Calu3 (cell line): ENCODE measurements at regions of chr1 and their contacts with region 1.

Region 1: DNA sequence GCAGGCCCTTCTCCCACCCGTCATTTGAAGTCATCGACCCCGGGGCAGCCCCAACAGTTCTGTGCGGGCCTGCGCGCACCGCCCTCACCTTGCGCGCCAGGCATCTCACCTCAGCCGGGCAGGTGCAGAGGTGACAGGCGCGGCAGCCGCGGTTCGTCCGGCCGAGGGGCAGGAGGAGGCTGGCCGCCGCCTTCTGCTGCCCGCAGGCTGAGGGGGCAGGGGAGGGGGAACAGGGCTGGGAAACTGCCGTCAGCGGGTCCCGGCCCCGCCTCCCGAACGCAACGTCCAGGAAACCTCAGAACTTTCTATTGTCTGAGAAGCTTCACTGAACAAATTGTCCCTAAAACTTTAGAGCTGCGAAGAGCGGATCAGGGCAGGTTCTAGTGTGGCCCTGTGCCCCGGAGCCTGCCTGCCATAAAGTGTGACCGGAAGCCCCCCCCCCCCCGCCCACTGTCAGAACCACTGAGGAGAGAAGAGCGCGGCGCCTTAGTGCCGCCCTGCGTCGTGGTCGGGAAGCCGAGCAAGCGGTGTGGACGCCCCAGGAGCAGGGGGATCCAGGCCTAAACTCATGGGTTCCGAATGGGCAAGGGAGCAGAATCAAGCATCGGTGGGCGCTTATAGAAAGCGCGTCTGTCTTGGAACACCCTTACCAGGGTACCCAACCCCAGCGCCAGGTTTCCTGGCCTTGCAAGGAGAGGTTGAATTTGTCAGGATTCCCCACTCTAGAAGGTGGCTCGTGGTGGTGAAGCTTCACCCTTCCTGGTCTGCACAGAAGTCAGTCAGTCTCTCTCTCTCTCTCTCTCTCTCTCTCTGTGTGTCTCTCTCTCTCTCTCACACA is 13.3 kb upstream of the TBX15 start:
- DNase-seq: peak; percentile 35
- H3K4me3 Mint-ChIP-seq: peak overlapping the region; percentile 68
- H3K27ac Mint-ChIP-seq: peak overlapping the region; percentile 96
- H3K4me1 Mint-ChIP-seq: peaks cover 14% of the 10 kb centered on the region
- H3K27me3 Mint-ChIP-seq: peaks cover 26% of the 10 kb centered on the region
- CTCF ChIP-seq: no peak

Region 2: GRCh38 chr1:118918230-118918939 is 83.0 kb before region 1 on chr1:
- CTCF ChIA-PET with region 1: no interaction called
- intact Hi-C with region 1: loop called (anchors 5 kb)
- DNase-seq: no peak
- H3K4me3 Mint-ChIP-seq: no peak overlapping the region
- H3K27ac Mint-ChIP-seq: no peak overlapping the region
- H3K4me1 Mint-ChIP-seq: peaks cover 18% of the 10 kb centered on the region
- H3K27me3 Mint-ChIP-seq: peaks cover 17% of the 10 kb centered on the region
- CTCF ChIP-seq: no peak

Region 3: DNA sequence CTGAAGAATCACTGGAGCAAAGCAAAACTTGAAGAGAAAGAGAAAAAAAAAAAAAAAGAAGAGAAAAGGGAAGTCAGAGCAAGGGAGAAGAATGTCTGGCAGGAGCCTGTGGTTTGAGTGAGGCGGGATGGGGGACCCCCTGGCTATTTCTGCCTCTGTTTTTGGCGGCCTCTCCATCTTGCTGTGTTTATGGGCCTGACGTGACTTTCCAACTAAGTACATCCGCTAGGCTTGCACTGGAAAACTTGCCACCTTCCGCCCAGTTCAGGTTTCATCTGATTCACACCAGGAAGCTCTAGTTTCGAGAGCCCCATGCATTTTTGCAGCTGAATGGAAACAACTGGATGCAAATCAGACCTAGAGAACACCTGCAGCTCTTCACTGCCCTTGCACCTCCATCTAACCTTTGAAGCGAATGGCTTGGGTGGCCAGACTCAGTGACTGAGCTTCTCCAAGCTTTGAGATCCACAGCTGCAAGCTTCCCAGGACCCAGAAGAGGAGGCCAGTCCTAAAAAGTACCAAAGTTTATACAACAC is 41.3 kb before region 1 on chr1:
- CTCF ChIA-PET with region 1: no interaction called
- intact Hi-C with region 1: loop called (anchors 5 kb)
- DNase-seq: peak; percentile 45
- H3K4me3 Mint-ChIP-seq: peak overlapping the region; percentile 35
- H3K27ac Mint-ChIP-seq: peak overlapping the region; percentile 74
- H3K4me1 Mint-ChIP-seq: peaks cover 48% of the 10 kb centered on the region
- H3K27me3 Mint-ChIP-seq: no peaks in the 10 kb centered on the region
- CTCF ChIP-seq: no peak